ENCODE measurements at regions of chr17 and their contacts with region 1.

Region 1: GRCh38 chr17:28854457-28855350 is at the start of gene ERAL1:
- H3K4me3 Mint-ChIP-seq: peak within 1 kb of the TSS; percentile 87
- H3K27ac Mint-ChIP-seq: peak within 1 kb of the TSS; percentile 93
- H3K4me1 Mint-ChIP-seq: peaks cover 12% of the 10 kb centered on the region
- H3K27me3 Mint-ChIP-seq: peaks cover 1% of the 10 kb centered on the region

Region 2: DNA sequence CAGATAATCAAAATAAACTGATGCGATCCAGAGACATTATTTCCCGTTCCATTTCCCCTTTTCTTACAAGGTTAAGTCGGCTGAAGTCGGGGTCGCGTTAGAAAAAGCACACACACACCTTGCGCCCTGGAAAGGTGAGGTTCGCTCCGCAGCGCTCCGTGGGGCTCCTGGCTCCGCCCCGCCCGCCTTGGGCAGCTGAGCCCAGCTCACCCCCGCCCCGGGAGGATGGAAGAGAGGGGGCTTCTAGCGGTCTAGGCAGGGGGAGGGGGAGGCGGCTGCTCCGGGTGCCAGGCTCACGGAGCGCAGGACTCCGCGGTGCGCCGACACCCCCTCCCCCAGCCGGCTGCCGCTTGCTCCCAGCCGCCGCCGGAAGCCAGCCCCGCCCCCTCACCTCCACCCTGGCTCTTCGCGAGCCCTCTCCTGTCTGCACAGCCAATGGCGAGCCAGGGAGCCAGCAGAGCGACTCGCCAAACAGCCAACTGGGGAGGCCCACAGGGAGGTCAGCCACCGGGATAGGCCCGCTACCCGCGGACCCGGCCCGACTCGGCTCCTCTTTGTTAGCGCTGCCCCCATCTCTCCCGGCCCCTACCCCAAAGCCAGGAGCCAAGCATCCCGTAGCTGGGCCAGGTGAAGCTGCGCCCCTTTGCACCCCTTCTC is 42.5 kb before region 1 on chr17:
- intact Hi-C with region 1: no loop called
- H3K4me3 Mint-ChIP-seq: peak overlapping the region; percentile 83
- H3K27ac Mint-ChIP-seq: peak overlapping the region; percentile 84
- H3K4me1 Mint-ChIP-seq: peaks cover 31% of the 10 kb centered on the region
- H3K27me3 Mint-ChIP-seq: no peaks in the 10 kb centered on the region

Region 3: DNA sequence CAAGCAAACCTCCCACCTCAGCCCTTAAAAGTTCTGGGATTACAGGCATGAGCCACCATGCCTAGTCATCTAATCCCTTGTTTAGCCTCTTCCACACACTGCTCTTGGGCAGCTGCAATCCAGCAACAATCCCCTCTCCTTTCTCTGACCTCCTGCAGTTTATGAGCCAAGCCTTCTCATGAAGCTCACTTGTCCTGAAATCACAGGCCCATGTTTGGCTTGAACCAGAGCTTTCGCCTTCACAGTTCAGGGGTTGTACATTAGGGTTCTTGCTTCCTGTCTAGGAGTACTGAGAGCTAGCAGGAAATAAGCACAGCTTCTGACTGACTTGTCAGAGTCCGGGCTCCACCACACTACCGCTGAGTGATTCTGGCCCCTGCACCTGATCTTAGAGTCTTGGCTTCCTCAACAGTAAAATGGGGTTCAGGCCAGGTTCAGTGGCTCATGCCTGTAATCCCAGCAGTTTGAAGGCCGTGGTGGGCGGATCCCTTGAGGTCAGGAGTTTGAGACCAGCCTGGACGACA is 16.4 kb after region 1 on chr17:
- intact Hi-C with region 1: no loop called
- H3K4me3 Mint-ChIP-seq: no peak overlapping the region
- H3K27ac Mint-ChIP-seq: no peak overlapping the region
- H3K4me1 Mint-ChIP-seq: peaks cover under 1% of the 10 kb centered on the region
- H3K27me3 Mint-ChIP-seq: no peaks in the 10 kb centered on the region

Region 4: GRCh38 chr17:28902819-28903545 is 48.3 kb after region 1 on chr17 and contains the start of gene DHRS13:
- intact Hi-C with region 1: loop called (anchors 2 kb)
- H3K4me3 Mint-ChIP-seq: peak within 1 kb of the TSS; percentile 74
- H3K27ac Mint-ChIP-seq: peak within 1 kb of the TSS; percentile 22
- H3K4me1 Mint-ChIP-seq: peaks cover 61% of the 10 kb centered on the region
- H3K27me3 Mint-ChIP-seq: peaks cover 2% of the 10 kb centered on the region